MCF 10A (cell line): ENCODE measurements at regions of chr1 and their contacts with region 1.

Region 1: GRCh38 chr1:163174524-163175437 is 27.9 kb downstream of the RGS5 start:
- DNase-seq: peak; percentile 73
- H3K4me3 Mint-ChIP-seq: peak overlapping the region; percentile 0
- H3K27ac Mint-ChIP-seq: no peak overlapping the region
- H3K4me1 Mint-ChIP-seq: peaks cover 19% of the 10 kb centered on the region
- H3K27me3 Mint-ChIP-seq: no peaks in the 10 kb centered on the region
- CTCF ChIP-seq: peak; percentile 95

Region 2: GRCh38 chr1:162847839-162848453 is 326.8 kb before region 1 on chr1:
- CTCF ChIA-PET with region 1: interaction called, 110 read pairs
- POLR2A ChIA-PET with region 1: no interaction called
- intact Hi-C with region 1: no loop called
- DNase-seq: peak; percentile 92
- H3K4me3 Mint-ChIP-seq: no peak overlapping the region
- H3K27ac Mint-ChIP-seq: no peak overlapping the region
- H3K4me1 Mint-ChIP-seq: peaks cover 7% of the 10 kb centered on the region
- H3K27me3 Mint-ChIP-seq: peaks cover 24% of the 10 kb centered on the region
- CTCF ChIP-seq: peak; percentile 96

Region 3: DNA sequence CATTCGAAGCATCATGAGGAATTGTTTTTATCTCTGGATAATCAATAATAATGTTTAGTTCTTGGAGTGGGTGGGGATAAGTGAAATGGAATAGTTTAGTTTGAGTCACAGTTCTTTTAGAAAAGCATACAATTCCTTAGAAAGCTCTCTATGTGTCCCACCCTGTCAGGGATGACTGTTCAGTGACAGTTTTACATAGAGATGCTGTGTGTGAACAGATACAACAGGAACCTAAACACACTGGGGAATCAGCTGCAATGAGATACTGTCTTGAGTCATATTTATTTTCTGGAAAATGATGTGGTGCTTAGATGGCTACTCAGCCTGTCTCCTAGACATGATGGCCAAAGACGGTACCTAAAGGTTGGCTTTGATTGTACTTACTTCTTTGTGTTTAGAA is 288.1 kb before region 1 on chr1:
- CTCF ChIA-PET with region 1: interaction called, 15 read pairs
- POLR2A ChIA-PET with region 1: no interaction called
- intact Hi-C with region 1: no loop called
- DNase-seq: no peak
- H3K4me3 Mint-ChIP-seq: no peak overlapping the region
- H3K27ac Mint-ChIP-seq: no peak overlapping the region
- H3K4me1 Mint-ChIP-seq: no peaks in the 10 kb centered on the region
- H3K27me3 Mint-ChIP-seq: no peaks in the 10 kb centered on the region
- CTCF ChIP-seq: no peak

Region 4: GRCh38 chr1:162937716-162938715 is 236.8 kb before region 1 on chr1:
- CTCF ChIA-PET with region 1: interaction called, 10 read pairs
- POLR2A ChIA-PET with region 1: no interaction called
- intact Hi-C with region 1: loop called (anchors 1 kb)
- DNase-seq: no peak
- H3K4me3 Mint-ChIP-seq: no peak overlapping the region
- H3K27ac Mint-ChIP-seq: no peak overlapping the region
- H3K4me1 Mint-ChIP-seq: peaks cover 9% of the 10 kb centered on the region
- H3K27me3 Mint-ChIP-seq: no peaks in the 10 kb centered on the region
- CTCF ChIP-seq: no peak

Region 5: GRCh38 chr1:163071405-163072255 is 103.2 kb before region 1 on chr1:
- CTCF ChIA-PET with region 1: interaction called, 148 read pairs
- POLR2A ChIA-PET with region 1: no interaction called
- intact Hi-C with region 1: loop called (anchors 1 kb)
- DNase-seq: peak; percentile 90
- H3K4me3 Mint-ChIP-seq: no peak overlapping the region
- H3K27ac Mint-ChIP-seq: no peak overlapping the region
- H3K4me1 Mint-ChIP-seq: peaks cover 5% of the 10 kb centered on the region
- H3K27me3 Mint-ChIP-seq: peaks cover 44% of the 10 kb centered on the region
- CTCF ChIP-seq: peak; percentile 88

Region 6: GRCh38 chr1:163186862-163187261 is 12.1 kb after region 1 on chr1:
- CTCF ChIA-PET with region 1: interaction called, 25 read pairs
- POLR2A ChIA-PET with region 1: no interaction called
- intact Hi-C with region 1: no loop called
- DNase-seq: no peak
- H3K4me3 Mint-ChIP-seq: no peak overlapping the region
- H3K27ac Mint-ChIP-seq: no peak overlapping the region
- H3K4me1 Mint-ChIP-seq: no peaks in the 10 kb centered on the region
- H3K27me3 Mint-ChIP-seq: no peaks in the 10 kb centered on the region
- CTCF ChIP-seq: no peak

Region 7: DNA sequence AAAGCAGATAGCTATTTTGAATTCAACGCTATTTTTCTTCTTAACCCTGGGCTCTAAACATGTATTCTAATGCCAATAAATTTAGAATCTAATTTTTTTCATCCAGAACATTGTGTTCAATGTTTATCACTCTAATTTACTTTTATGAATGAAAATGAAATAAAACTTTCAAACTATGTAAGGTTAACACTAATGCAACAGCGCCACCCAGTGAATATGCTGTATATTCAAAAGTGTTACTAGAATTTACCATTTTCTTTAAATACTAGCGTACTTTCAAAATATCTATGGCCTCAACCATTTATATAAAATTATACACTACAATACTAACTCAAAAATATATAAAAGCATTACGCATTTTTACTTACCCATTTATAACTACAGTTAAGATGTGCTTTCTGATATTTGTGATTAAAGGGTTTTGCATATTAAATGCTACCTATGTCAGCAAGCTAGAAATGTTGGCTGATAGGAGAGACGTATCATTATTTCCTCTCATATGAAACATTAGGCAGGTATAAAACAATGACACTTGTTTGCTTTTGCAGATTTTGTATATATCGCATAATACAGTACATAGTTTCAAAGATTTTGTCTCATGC is 141.1 kb after region 1 on chr1:
- CTCF ChIA-PET with region 1: interaction called, 82 read pairs
- POLR2A ChIA-PET with region 1: no interaction called
- intact Hi-C with region 1: loop called (anchors 1 kb)
- DNase-seq: peak; percentile 68
- H3K4me3 Mint-ChIP-seq: no peak overlapping the region
- H3K27ac Mint-ChIP-seq: no peak overlapping the region
- H3K4me1 Mint-ChIP-seq: peaks cover 4% of the 10 kb centered on the region
- H3K27me3 Mint-ChIP-seq: no peaks in the 10 kb centered on the region
- CTCF ChIP-seq: peak; percentile 61